T-cell (primary cell): ENCODE measurements at regions of chr3 and their contacts with region 1.

Region 1: DNA sequence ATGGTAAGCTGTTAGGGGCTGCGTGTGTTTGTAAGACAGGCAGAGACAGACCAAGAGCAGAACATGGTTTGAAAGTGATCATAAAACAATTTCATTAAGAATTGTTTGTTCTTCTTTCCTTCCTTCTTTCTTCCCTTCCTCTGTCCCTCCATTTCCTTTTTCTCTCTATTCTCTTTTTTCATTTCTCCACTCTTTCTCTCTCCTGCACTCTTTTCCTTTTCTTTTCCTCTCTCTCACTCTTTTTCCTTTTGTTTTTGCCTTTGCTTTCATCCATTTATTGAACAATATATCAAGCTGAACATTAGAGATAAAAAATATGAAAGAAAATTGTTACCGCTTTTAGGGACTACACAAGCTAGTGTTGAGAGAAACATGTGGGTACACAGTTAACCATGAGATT is 62.2 kb upstream of the GOLIM4 start:
- DNase-seq: no peak
- ATAC-seq: no peak
- H3K4me3 ChIP-seq: no peak overlapping the region
- H3K4me3 Mint-ChIP-seq: no peak overlapping the region
- H3K27ac ChIP-seq: no peak overlapping the region
- H3K27ac Mint-ChIP-seq: no peak overlapping the region
- H3K4me1 ChIP-seq: no peaks in the 10 kb centered on the region
- H3K4me1 Mint-ChIP-seq: no peaks in the 10 kb centered on the region
- H3K27me3 ChIP-seq: peaks cover 0 to 8% of the 10 kb centered on the region in 2 experiments
- H3K27me3 Mint-ChIP-seq: peaks cover 7 to 11% of the 10 kb centered on the region in 2 donors

Region 2: GRCh38 chr3:168288511-168289401 is 130.9 kb after region 1 on chr3:
- CTCF ChIA-PET with region 1: no interaction called
- POLR2A ChIA-PET with region 1: no interaction called
- DNase-seq: no peak
- ATAC-seq: no peak
- H3K4me3 ChIP-seq: no peak overlapping the region
- H3K4me3 Mint-ChIP-seq: no peak overlapping the region
- H3K27ac ChIP-seq: no peak overlapping the region
- H3K27ac Mint-ChIP-seq: no peak overlapping the region
- H3K4me1 ChIP-seq: no peaks in the 10 kb centered on the region
- H3K4me1 Mint-ChIP-seq: no peaks in the 10 kb centered on the region
- H3K27me3 ChIP-seq: no peaks in the 10 kb centered on the region
- H3K27me3 Mint-ChIP-seq: no peaks in the 10 kb centered on the region

Region 3: DNA sequence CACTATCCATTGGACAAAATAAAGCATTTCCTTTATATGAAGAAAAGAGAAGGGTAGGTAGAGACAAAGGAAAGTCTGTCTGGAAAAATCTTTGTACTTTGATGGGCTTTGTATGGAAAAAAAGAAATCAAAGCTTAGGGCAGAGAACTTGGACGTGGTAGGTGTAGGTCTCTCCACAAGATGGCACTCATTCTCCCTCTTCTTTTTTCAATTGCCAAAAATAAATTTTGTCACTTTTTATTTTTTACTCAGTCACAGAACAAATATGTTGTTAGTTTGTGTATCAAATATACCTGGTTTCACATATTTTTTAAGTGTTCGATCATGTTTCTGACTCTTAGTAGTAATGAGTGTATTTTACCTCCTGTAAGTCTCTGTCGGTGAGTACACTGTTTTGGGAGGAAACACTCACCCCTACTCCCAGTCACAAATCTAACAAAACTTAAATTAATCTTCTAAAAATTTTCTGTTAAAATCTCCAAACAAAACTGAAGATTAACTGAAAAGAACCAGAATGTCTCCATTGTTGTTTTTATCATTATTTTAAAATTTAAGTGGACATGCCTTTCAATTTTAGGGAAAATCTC is 353.6 kb after region 1 on chr3:
- CTCF ChIA-PET with region 1: no interaction called
- POLR2A ChIA-PET with region 1: no interaction called
- DNase-seq: no peak
- ATAC-seq: no peak
- H3K4me3 ChIP-seq: no peak overlapping the region
- H3K4me3 Mint-ChIP-seq: no peak overlapping the region
- H3K27ac ChIP-seq: no peak overlapping the region
- H3K27ac Mint-ChIP-seq: no peak overlapping the region
- H3K4me1 ChIP-seq: no peaks in the 10 kb centered on the region
- H3K4me1 Mint-ChIP-seq: no peaks in the 10 kb centered on the region
- H3K27me3 ChIP-seq: no peaks in the 10 kb centered on the region
- H3K27me3 Mint-ChIP-seq: no peaks in the 10 kb centered on the region

Region 4: DNA sequence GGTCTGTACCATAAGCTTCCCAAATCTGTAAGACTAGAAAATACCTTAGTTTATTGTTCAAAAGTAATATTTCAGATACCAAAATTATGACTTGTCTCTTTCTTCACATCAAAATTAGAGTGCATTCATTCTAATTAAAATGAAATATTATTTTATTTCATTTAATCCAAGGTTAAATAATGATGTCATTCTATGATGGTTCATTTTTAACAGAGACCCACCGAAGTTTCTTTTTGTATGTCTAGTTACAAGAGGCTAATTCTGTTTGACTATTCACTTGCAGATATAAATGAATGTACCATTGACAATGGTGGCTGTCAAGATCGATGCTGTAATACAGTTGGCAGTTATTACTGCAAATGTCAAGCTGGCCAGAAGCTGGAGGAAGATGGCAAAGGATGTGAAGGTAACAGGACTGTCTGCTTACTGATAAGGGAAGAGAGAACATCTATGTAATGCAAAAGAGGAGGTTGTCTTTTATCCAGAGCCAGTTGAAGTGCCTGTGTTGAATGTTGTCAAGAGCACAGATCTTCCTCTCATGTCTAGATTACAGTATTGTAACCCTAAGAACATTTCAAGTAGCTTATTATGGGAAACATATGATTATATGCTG is 487.2 kb after region 1 on chr3:
- CTCF ChIA-PET with region 1: no interaction called
- POLR2A ChIA-PET with region 1: interaction called in 1 of 2 experiments, 13 read pairs
- DNase-seq: no peak
- ATAC-seq: no peak
- H3K4me3 ChIP-seq: no peak overlapping the region
- H3K4me3 Mint-ChIP-seq: no peak overlapping the region
- H3K27ac ChIP-seq: no peak overlapping the region
- H3K27ac Mint-ChIP-seq: no peak overlapping the region
- H3K4me1 ChIP-seq: no peaks in the 10 kb centered on the region
- H3K4me1 Mint-ChIP-seq: no peaks in the 10 kb centered on the region
- H3K27me3 ChIP-seq: no peaks in the 10 kb centered on the region
- H3K27me3 Mint-ChIP-seq: no peaks in the 10 kb centered on the region